HCT116 (cell line): ENCODE measurements at regions of chr15 and their contacts with region 1.

Region 1: DNA sequence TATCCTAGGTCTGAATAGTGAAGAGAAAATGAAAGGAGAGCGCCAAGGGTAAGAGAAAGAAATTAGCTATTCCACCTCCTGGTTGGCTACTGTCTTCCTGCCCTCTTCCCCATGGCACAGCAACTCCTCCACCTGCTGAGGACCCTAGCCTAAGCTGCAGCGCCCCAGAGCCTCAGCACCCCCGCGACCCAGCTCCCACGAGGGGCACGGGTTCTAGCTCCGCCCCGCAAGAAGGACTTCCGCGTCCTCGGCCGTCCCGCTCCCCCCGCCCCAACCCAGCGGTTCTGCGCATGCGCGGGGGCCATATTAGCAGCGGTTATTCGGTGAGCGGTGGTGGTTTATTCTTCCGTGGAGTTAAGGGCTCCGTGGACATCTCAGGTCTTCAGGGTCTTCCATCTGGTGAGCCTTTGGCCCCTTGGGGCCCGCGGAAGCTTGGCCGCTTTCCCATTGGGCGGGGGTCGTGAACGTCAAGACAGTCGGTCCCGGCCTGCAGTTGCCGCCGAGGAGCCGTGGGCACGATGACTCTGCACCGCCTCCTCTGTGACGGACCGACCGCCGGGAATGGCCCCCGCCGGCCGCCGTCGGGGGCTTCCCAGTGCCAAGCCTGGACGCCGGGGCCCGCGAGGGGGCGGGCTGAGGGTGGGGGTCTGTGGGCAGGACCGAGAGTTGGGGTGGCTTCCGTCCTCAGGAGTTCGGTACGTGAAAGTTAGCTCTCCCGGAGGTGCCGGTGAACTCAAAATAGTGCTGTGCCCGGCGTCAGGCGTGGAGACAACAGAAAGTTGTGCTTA is at the start of gene PSMA4:
- DNase-seq: peak; percentile 48
- ATAC-seq: peak; percentile 88
- H3K4me3 ChIP-seq: peak within 1 kb of the TSS; percentile 84 to 91
- H3K27ac ChIP-seq: peak within 1 kb of the TSS; percentile 86
- H3K4me1 ChIP-seq: peaks cover 5 to 14% of the 10 kb centered on the region in 2 experiments; a peak in 3 of 4 replicates
- H3K27me3 ChIP-seq: no peaks in the 10 kb centered on the region
- CTCF ChIP-seq: no peak
- POLR2A ChIP-seq: peak; percentile 55
- RAD21 ChIP-seq: no peak
- total RNA-seq, gene PSMA4: 294 TPM

Region 2: DNA sequence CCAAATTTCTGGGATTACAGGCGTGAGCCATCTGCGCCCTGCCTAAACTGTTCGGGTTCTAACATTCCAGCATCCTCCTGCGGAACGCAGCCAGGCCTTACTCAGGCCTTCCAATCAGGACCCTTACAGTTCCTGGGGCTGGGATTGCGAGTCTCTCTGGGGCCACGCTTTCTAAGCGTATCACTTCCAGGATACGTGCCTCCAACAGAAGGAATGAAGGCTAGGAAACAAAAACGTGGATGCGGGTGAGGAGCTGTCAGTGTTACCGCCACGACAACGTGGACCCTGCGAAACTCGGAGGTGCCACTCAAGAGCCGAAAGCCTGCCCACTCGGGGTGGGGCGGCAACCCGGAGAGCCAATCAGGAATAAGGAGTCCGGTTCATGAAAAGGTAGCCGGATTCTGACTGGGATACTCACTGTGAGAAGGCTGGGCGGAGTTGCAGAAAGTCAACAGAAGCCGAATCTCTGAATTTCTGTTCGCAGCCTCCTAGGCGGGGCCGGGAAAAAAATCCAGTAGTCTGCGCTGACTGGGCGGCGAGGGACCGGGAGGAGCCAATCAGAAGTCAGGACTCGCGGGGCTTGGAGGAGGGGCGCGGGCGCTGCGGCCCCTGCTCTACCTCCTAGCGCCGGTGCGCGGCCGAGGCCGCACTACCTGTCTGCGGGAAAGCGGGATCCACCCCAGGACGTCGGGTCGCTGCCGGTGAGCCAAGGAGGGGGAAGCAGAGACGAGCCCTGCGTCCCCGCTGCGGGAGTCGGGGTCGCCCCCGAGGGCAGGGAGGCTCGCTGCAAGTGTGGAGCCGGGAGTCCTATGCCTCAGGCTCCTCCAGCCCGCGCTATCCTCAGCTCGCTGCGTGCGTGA is 33.1 kb before region 1 on chr15 and contains the start of gene HYKK:
- CTCF ChIA-PET with region 1: no interaction called
- POLR2A ChIA-PET with region 1: no interaction called
- RAD21 ChIA-PET with region 1: no interaction called
- intact Hi-C with region 1: loop called (anchors 5 kb)
- DNase-seq: peak; percentile 94
- ATAC-seq: peak; percentile 97
- H3K4me3 ChIP-seq: peak within 1 kb of the TSS; percentile 79 to 85
- H3K27ac ChIP-seq: peak within 1 kb of the TSS; percentile 27
- H3K4me1 ChIP-seq: peaks cover 5 to 17% of the 10 kb centered on the region in 2 experiments; a peak in 3 of 4 replicates
- H3K27me3 ChIP-seq: no peaks in the 10 kb centered on the region
- CTCF ChIP-seq: no peak
- POLR2A ChIP-seq: peak; percentile 38
- RAD21 ChIP-seq: no peak
- total RNA-seq, gene HYKK: 6.2 TPM

Region 3: DNA sequence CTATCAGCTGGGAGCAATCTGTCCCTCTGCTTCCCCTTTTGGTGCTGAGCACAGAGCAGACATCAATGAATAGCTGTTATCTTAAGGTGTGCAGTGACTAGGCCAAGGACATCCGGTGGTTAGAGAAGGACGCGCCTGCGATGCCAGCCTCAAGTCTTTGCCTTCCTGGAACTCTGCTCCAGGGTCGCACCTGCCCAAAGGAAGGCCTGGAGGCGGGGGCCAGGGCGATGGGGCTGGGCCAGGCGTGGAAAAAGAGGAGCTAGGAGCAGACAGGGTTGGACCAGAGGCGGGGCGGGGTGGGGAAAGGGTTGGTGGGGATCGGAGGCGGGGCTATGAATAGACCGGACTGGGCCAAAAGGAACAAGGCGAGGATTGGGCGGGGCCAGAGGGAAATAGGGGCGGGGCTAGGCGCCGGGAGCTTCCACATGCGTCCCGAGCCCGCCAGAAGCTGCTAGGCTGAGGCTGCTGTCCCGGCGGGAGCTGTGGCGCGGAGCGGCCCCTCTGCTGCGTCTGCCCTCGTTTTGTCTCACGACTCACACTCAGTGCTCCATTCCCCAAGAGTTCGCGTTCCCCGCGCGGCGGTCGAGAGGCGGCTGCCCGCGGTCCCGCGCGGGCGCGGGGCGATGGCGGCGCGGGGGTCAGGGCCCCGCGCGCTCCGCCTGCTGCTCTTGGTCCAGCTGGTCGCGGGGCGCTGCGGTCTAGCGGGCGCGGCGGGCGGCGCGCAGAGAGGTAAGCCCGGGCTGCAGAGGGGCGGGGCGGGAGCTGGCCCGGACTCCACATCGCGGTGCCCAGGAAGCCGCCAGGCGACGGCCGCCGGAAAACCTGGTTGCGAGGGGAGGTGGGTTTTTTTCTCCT is 25.0 kb after region 1 on chr15 and contains the start of gene CHRNA5:
- CTCF ChIA-PET with region 1: interaction called, 4 read pairs
- POLR2A ChIA-PET with region 1: interaction called, 12 read pairs
- RAD21 ChIA-PET with region 1: interaction called in 1 of 2 experiments, 3 read pairs
- intact Hi-C with region 1: no loop called
- DNase-seq: peak; percentile 79
- ATAC-seq: peak; percentile 94
- H3K4me3 ChIP-seq: peak within 1 kb of the TSS; percentile 67 to 86
- H3K27ac ChIP-seq: peak within 1 kb of the TSS; percentile 78
- H3K4me1 ChIP-seq: peaks cover 0 to 14% of the 10 kb centered on the region in 2 experiments; a peak in 2 of 4 replicates
- H3K27me3 ChIP-seq: no peaks in the 10 kb centered on the region
- CTCF ChIP-seq: no peak
- POLR2A ChIP-seq: peak; percentile 79
- RAD21 ChIP-seq: no peak
- total RNA-seq, gene CHRNA5: 25.2 TPM